ENCODE measurements at regions of chr9 and their contacts with region 1.

Region 1: DNA sequence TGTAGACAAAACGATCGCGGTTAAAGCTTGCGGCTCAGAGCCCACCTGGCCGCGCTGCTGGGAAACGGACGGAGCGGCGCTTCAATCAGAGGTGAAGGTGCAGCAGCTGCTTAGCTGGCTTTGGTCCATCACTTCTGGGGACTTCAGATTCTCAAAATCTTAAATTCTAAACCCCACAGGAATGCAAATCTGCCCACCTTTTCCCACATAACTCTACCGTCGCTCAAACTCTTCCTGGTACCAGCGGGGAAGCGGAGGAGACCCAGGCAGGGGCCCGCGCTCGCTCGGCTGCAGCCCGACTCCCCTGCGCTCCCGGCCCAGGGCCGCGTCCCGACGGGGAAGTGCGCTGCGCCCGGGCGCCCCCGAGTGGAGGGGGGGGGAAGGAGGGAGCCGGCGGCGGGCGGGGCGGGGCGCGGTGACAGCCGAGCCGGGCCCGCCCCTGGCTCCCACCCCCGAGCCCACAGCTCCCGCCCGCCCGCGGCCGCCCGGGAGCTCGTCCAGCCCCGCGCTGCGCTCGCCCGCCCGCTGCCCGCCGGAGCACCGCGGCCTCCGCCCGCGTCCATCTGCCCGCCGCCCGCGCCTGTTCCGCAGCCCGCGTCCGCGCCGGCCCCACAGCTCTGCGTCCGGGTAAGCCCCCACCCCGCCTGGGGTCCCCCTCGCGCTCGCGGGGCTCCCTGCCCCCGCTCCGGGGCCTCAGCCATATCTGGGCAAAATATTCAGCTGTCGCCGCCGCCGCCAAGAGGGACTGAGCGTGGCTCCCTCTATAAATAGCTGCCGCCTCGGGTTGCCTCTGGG is at the start of gene TMOD1:
- DNase-seq: peak; percentile 71 to 88
- ATAC-seq: peak; percentile 59 to 90 (median 70)
- H3K4me3 ChIP-seq: peak within 1 kb of the TSS; percentile 62 to 99 (median 84)
- H3K27ac ChIP-seq: peak within 1 kb of the TSS; percentile 83 to 98 (median 93)
- H3K4me1 ChIP-seq: peaks cover 9 to 58% (median 38%) of the 10 kb centered on the region in 9 donors
- H3K27me3 ChIP-seq: peaks cover 0 to 61% (median 8%) of the 10 kb centered on the region in 7 donors
- CTCF ChIP-seq: peak in 4 of 9 donors; percentile 7 to 44 (median 37)
- total RNA-seq, gene TMOD1: 164 to 203 (median 181) TPM

Region 2: GRCh38 chr9:97468658-97469448 is 32.5 kb before region 1 on chr9:
- intact Hi-C with region 1: no loop called
- DNase-seq: peak; percentile 56 to 85
- ATAC-seq: peak; percentile 95 to 98 (median 98)
- H3K4me3 ChIP-seq: no peak overlapping the region
- H3K27ac ChIP-seq: peak overlapping the region in 9 of 10 donors; percentile 17 to 72 (median 53)
- H3K4me1 ChIP-seq: peaks cover 0 to 24% (median 7%) of the 10 kb centered on the region in 9 donors
- H3K27me3 ChIP-seq: no peaks in the 10 kb centered on the region
- CTCF ChIP-seq: peak; percentile 58 to 95 (median 83)

Region 3: GRCh38 chr9:97528529-97529230 is 27.3 kb after region 1 on chr9:
- intact Hi-C with region 1: loop called in 1 of 10 experiments (anchors 1 kb)
- DNase-seq: peak in 1 of 2 donors; percentile 41
- ATAC-seq: peak; percentile 28 to 75 (median 62)
- H3K4me3 ChIP-seq: no peak overlapping the region
- H3K27ac ChIP-seq: peak overlapping the region; percentile 13 to 85 (median 78)
- H3K4me1 ChIP-seq: peaks cover 13 to 65% (median 35%) of the 10 kb centered on the region in 9 donors
- H3K27me3 ChIP-seq: no peaks in the 10 kb centered on the region
- CTCF ChIP-seq: no peak

Region 4: DNA sequence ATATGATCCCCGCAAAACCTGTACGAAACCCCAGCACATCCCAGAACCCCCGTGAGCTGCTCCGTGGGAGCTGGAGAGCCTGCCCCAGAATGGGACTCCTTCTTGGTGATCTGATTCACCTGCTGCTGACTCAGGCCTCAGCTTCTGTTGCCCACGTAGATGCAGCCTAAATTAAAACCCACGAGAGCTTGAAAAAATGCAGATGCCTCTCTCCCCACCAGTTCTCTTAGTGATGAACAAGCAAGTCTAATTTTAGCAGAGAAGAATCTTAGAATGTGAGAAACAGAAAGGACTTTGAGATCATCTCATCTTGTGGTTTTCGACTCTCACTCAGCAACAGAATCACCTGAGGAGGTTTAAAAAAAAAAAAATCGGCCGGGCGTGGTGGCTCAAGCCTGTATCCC is 57.7 kb after region 1 on chr9:
- intact Hi-C with region 1: loop called in 3 of 10 experiments (anchors 2 to 5 kb)
- DNase-seq: no peak
- ATAC-seq: no peak
- H3K4me3 ChIP-seq: no peak overlapping the region
- H3K27ac ChIP-seq: peak overlapping the region; percentile 26 to 90 (median 83)
- H3K4me1 ChIP-seq: peaks cover 21 to 82% (median 70%) of the 10 kb centered on the region in 9 donors
- H3K27me3 ChIP-seq: no peaks in the 10 kb centered on the region
- CTCF ChIP-seq: no peak

Region 5: DNA sequence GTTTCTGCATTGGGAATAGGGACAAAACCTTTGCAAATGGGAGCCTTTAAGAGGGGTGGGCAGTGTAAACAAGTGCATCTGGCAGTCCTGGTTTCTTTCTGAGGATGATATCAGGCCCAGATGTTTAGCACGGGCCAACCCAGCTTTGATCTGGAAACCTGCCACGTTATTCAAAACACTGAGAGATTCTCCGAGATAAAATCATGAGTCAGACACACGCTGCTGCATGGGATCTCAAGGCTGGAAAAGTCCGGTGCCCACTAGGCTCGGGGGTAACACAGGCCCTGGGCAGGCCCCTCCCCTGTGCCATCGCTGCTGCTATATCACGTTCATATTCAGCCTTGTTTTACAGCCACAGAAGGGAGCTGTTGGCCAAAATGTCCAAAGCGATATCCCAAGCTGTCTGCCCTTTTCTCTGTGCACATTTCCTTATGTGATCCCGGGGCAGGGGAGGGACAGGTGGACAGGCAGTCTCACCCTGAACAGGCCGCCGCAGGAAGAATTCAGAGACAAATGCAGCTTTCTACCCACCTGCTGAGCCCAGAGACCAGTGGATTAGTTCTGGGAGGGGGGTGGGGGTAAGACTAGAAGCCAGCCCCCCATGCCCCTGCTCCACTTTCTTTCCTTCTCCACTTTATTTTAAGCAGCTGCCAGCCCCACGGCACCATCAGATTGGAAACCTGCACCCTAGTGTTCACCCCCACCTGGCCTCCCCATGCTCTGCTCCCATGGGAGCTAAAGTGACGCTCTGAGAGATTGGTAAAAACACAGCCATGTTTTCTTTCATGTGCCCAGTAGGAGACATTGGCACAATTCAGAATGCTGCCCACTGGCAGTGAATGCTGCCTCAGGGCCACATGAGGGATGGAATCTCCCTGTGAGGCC is 63.2 kb after region 1 on chr9:
- intact Hi-C with region 1: loop called in 3 of 10 experiments (anchors 2 to 5 kb)
- DNase-seq: peak in 1 of 2 donors; percentile 33
- ATAC-seq: peak; percentile 19 to 74 (median 64)
- H3K4me3 ChIP-seq: no peak overlapping the region
- H3K27ac ChIP-seq: peak overlapping the region in 9 of 10 donors; percentile 18 to 65 (median 54)
- H3K4me1 ChIP-seq: peaks cover 5 to 45% (median 32%) of the 10 kb centered on the region in 9 donors
- H3K27me3 ChIP-seq: no peaks in the 10 kb centered on the region
- CTCF ChIP-seq: peak in 1 of 9 donors; percentile 3